ENCODE measurements at regions of chr15 and their contacts with region 1.

Region 1: DNA sequence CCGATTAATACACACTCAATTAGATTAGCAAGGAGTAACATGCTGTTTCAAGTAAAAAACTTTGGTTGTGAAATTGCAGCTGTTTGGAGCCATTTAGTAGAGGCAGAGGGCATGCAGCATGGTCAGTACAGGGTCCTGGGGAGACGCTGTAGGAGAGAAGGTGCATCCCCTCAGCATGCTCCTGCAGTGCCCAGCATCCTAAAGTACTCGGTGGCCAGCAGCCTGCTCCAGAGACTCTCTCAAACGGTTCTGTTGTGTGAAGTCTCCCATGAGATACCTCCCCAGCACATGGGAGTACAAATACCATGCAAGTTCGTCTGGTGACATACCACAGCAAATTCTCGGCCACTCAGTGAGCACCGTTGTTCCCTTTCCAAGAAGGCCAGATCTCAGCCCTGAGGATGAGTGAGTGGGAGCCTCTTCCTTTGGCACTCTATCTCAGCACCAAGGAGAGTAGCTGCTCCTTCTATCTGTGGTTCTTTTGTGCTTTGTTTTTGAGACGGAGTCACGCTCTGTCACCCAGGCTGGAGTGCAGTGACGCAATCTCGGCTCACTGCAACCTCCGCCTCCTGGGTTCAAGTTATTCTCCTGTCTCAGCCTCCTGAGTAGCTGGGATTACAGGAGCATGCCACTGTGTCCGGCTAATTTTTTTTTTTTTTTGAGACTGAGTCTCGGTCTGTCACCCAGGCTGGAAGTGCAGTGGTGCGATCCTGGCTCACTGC is 72.7 kb downstream of the TJP1 start:
- DNase-seq: no peak
- H3K4me3 ChIP-seq: no peak overlapping the region
- H3K27ac ChIP-seq: no peak overlapping the region
- H3K4me1 ChIP-seq: peaks cover 0 to 10% (median 0%) of the 10 kb centered on the region in 4 donors
- H3K27me3 ChIP-seq: no peaks in the 10 kb centered on the region
- CTCF ChIP-seq: no peak

Region 2: GRCh38 chr15:29825227-29825626 is 75.7 kb after region 1 on chr15:
- intact Hi-C with region 1: no loop called
- DNase-seq: no peak
- H3K4me3 ChIP-seq: no peak overlapping the region
- H3K27ac ChIP-seq: no peak overlapping the region
- H3K4me1 ChIP-seq: peaks cover 0 to 29% (median 7%) of the 10 kb centered on the region in 4 donors
- H3K27me3 ChIP-seq: no peaks in the 10 kb centered on the region
- CTCF ChIP-seq: no peak

Region 3: DNA sequence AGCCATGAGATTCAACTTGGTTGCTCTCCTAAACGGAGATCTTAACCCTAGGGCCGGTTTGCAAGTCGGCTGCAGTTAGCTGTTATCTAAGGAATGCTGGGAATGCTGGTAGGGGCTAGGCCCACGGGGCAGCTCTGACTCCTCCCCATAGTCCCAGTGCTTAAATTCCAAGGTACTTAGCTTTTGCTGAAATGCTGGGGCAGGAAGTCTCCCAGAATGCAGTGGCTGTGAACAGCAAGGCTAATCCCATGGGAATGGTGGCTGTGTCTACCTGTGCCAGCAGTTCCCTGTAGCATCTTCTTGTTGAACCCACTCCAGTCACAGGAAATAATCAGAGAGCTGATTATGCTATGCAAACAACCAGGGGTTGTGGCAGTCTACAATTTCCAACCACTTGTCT is 175.2 kb after region 1 on chr15:
- intact Hi-C with region 1: loop called (anchors 5 kb)
- DNase-seq: peak in 1 of 2 donors; percentile 66
- H3K4me3 ChIP-seq: no peak overlapping the region
- H3K27ac ChIP-seq: peak overlapping the region; percentile 41 to 53
- H3K4me1 ChIP-seq: peaks cover 0 to 15% (median 10%) of the 10 kb centered on the region in 4 donors
- H3K27me3 ChIP-seq: no peaks in the 10 kb centered on the region
- CTCF ChIP-seq: no peak